Heart left ventricle (tissue), 16 donors: ENCODE measurements at regions of chrX and their contacts with region 1.

Region 1: DNA sequence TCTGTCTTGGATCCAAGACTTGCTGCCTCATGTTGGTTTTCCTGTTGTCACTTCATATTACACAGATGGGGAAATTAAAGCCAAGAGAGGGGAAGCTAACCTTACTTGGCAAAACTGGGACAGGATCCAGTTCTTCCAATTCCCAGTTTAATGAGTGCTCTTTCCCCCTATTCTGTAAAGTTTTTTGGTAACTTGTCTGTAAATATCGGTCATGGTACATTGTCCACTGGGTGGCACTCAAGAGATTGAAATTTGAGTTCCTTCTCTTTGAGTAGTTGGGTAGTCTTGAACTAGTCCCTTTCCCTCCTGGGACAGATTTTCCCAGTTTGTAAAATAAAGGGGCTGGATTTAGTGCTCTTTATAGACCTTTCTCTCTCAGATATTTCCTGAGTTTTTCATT is 12.4 kb upstream of the EOLA2 start:
- DNase-seq: no peak
- ATAC-seq: peak in 2 of 4 donors; percentile 36 to 44
- H3K4me3 ChIP-seq: no peak overlapping the region
- H3K27ac ChIP-seq: no peak overlapping the region
- H3K4me1 ChIP-seq: peaks cover 0 to 7% (median 0%) of the 10 kb centered on the region in 12 donors
- H3K27me3 ChIP-seq: no peaks in the 10 kb centered on the region
- CTCF ChIP-seq: peak in 11 of 12 donors; percentile 17 to 58 (median 36)
- POLR2A ChIP-seq: no peak

Region 2: DNA sequence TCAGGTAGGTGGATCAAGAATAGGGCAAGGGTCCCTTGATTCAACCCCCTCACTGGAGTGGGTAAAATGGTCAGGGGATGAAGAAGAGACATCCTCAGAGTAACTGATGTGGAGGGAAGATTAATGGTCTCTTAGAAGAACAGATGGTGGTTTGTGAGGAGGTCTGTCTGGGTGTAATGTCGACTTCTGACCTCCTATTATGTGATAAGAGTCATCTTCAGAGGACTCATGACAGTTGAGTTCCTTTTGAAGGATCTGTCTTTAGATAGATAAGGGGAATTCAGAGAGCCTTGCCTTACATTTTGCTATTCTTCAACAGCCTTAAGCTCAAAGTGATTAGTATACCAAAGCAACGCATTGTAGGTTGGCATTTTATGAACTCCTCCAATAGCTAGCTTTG is 96.8 kb before region 1 on chrX:
- intact Hi-C with region 1: no loop called
- DNase-seq: no peak
- ATAC-seq: no peak
- H3K4me3 ChIP-seq: no peak overlapping the region
- H3K27ac ChIP-seq: no peak overlapping the region
- H3K4me1 ChIP-seq: no peaks in the 10 kb centered on the region
- H3K27me3 ChIP-seq: peaks cover 0 to 17% (median 0%) of the 10 kb centered on the region in 9 donors
- CTCF ChIP-seq: no peak
- POLR2A ChIP-seq: no peak

Region 3: GRCh38 chrX:149994013-149994412 is 43.3 kb after region 1 on chrX:
- intact Hi-C with region 1: no loop called
- DNase-seq: no peak
- ATAC-seq: no peak
- H3K4me3 ChIP-seq: no peak overlapping the region
- H3K27ac ChIP-seq: peak overlapping the region in 3 of 12 donors; percentile 13 to 63 (median 57)
- H3K4me1 ChIP-seq: peaks cover 0 to 5% (median 0%) of the 10 kb centered on the region in 12 donors
- H3K27me3 ChIP-seq: no peaks in the 10 kb centered on the region
- CTCF ChIP-seq: no peak
- POLR2A ChIP-seq: no peak

Region 4: GRCh38 chrX:150094996-150095395 is 144.3 kb after region 1 on chrX:
- intact Hi-C with region 1: no loop called
- DNase-seq: no peak
- ATAC-seq: no peak
- H3K4me3 ChIP-seq: no peak overlapping the region
- H3K27ac ChIP-seq: no peak overlapping the region
- H3K4me1 ChIP-seq: peaks cover 0 to 10% (median 0%) of the 10 kb centered on the region in 12 donors
- H3K27me3 ChIP-seq: peaks cover 0 to 7% (median 0%) of the 10 kb centered on the region in 9 donors
- CTCF ChIP-seq: no peak
- POLR2A ChIP-seq: no peak

Region 5: DNA sequence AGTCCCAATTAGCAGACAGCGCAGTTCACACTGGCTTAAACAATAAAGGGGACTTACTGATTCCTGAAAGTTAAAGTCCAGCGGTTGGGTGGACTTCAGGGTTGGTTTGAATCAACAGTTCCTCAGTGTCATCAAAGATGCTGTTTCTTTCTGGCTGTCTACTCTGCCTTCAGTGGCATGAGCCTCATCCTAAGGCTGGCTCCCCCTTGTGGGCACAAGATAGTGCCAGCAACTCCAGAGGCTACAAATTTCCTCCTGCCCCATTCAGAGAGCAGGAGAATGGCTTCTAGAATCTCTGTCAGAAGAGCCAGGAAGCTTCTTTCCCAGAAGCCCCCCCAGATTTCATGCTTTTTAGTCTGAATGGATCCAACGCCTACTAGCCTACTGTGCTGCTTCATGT is 535.3 kb after region 1 on chrX:
- intact Hi-C with region 1: loop called in 1 of 10 experiments (anchors 10 kb)
- DNase-seq: peak in 4 of 5 donors; percentile 22 to 57 (median 40)
- ATAC-seq: peak in 3 of 4 donors; percentile 64 to 73 (median 68)
- H3K4me3 ChIP-seq: no peak overlapping the region
- H3K27ac ChIP-seq: no peak overlapping the region
- H3K4me1 ChIP-seq: no peaks in the 10 kb centered on the region
- H3K27me3 ChIP-seq: no peaks in the 10 kb centered on the region
- CTCF ChIP-seq: peak; percentile 40 to 64 (median 54)
- POLR2A ChIP-seq: no peak

Region 6: DNA sequence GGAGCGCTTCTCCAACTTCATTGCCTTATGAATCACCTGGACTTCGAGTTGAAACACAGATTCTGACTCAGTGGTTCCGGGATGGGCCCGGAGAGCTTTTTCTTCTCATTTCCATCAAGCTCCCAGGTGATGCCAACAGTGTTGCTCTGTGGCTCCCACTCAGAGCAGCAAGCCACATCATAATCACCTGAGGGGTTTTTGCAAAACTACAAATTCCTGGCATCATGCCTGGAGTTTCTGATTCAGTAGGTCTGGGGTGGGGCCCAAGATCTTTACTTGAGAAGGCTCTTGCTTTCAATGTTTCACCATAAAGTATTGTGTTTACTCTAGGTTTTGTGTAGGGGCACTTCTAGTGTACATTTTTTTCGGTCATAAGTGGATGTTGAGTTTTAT is 624.7 kb after region 1 on chrX:
- intact Hi-C with region 1: loop called in 1 of 10 experiments (anchors 10 kb)
- DNase-seq: no peak
- ATAC-seq: no peak
- H3K4me3 ChIP-seq: peak overlapping the region in 1 of 12 donors; percentile 25
- H3K27ac ChIP-seq: peak overlapping the region in 1 of 12 donors; percentile 54
- H3K4me1 ChIP-seq: peaks cover 0 to 54% (median 8%) of the 10 kb centered on the region in 12 donors
- H3K27me3 ChIP-seq: no peaks in the 10 kb centered on the region
- CTCF ChIP-seq: no peak
- POLR2A ChIP-seq: no peak

Region 7: GRCh38 chrX:150676221-150676620 is 725.5 kb after region 1 on chrX:
- intact Hi-C with region 1: loop called in 4 of 10 experiments (anchors 10 kb)
- DNase-seq: no peak
- ATAC-seq: no peak
- H3K4me3 ChIP-seq: no peak overlapping the region
- H3K27ac ChIP-seq: no peak overlapping the region
- H3K4me1 ChIP-seq: no peaks in the 10 kb centered on the region
- H3K27me3 ChIP-seq: peaks cover 0 to 6% (median 0%) of the 10 kb centered on the region in 9 donors
- CTCF ChIP-seq: no peak
- POLR2A ChIP-seq: no peak

Region 8: DNA sequence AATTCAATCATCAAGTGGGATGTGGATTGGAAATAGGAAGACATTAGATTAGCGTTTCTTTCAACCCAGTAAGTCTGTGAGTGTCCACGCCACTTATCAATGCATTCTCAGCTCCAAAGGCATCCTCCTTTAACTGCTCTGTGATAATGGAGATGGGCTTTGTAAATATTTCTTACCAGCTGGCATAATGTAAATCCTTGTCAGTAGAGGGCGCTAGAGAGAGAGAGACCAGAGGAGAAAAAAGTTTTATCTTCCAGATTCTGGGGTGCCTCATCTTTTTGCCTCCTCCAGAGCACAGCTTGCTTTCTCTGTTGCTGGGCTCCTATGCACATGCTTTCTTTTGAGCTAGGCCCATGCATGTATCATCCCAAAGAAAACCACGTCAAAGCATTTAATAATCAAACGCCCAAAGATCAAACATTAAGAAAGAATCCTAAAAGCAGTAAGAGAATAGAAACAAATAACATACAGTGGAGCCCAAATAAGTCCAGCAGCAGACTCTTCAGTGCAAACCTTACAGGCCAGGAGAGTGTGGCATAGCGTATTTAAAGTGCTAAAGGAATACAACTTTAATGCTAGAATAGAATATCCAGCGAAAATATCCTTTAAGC is 733.0 kb after region 1 on chrX:
- intact Hi-C with region 1: loop called in 4 of 10 experiments (anchors 10 kb)
- DNase-seq: no peak
- ATAC-seq: no peak
- H3K4me3 ChIP-seq: no peak overlapping the region
- H3K27ac ChIP-seq: no peak overlapping the region
- H3K4me1 ChIP-seq: no peaks in the 10 kb centered on the region
- H3K27me3 ChIP-seq: peaks cover 0 to 4% (median 0%) of the 10 kb centered on the region in 9 donors
- CTCF ChIP-seq: peak; percentile 15 to 56 (median 47)
- POLR2A ChIP-seq: no peak

Region 9: GRCh38 chrX:150704030-150704613 is 753.4 kb after region 1 on chrX:
- intact Hi-C with region 1: loop called in 1 of 10 experiments (anchors 10 kb)
- DNase-seq: no peak
- ATAC-seq: peak in 2 of 4 donors; percentile 31 to 61
- H3K4me3 ChIP-seq: no peak overlapping the region
- H3K27ac ChIP-seq: peak overlapping the region in 1 of 12 donors; percentile 12
- H3K4me1 ChIP-seq: peaks cover 0 to 6% (median 0%) of the 10 kb centered on the region in 12 donors
- H3K27me3 ChIP-seq: no peaks in the 10 kb centered on the region
- CTCF ChIP-seq: no peak
- POLR2A ChIP-seq: no peak